Activated B cell treated with CpG ODN at 0.5 μM for 24 hours (primary cell): ENCODE measurements at regions of chr6 and their contacts with region 1.

Region 1: GRCh38 chr6:149028767-149029405 is 282.1 kb downstream of the UST start:
- DNase-seq: no peak
- ATAC-seq: peak; percentile 33
- H3K4me3 Mint-ChIP-seq: no peak overlapping the region
- H3K27ac Mint-ChIP-seq: peak overlapping the region; percentile 75
- H3K4me1 Mint-ChIP-seq: peaks cover 43% of the 10 kb centered on the region
- H3K27me3 Mint-ChIP-seq: no peaks in the 10 kb centered on the region
- CTCF ChIP-seq: peak; percentile 65

Region 2: DNA sequence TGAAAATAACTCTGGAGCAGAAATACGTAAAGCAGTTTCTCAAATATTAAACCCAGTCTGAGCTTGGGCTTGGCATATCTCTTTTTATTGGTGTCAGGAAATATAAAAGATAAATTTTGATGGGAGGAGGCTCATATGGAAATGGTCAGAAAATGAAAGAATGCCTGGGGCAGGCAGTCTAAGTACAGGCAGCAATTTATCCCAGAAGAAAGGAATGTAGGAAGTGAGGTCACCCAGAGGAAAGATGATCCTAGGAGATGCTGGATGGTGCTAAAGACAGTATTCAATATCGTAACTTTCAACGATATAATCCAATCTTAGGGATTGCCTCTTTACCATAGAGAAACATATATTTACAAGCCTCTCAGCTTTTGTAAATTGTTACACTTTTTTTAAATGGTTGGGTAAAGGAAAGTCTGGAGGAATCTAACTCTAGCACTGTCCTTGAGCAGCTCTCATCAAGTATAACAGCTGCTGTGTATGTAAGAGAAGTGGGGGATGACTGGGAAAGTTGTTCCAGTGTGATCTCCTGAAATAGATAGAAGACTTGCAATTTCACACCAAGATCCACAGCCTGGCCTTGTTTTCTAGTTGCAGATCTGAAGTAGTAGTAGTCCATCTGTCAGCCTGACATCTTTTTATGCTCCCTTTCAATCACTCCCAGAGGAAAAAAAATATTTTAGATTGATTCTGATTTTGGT is 943.1 kb before region 1 on chr6:
- CTCF ChIA-PET with region 1: no interaction called
- POLR2A ChIA-PET with region 1: no interaction called
- intact Hi-C with region 1: no loop called
- DNase-seq: no peak
- ATAC-seq: no peak
- H3K4me3 Mint-ChIP-seq: no peak overlapping the region
- H3K27ac Mint-ChIP-seq: no peak overlapping the region
- H3K4me1 Mint-ChIP-seq: no peaks in the 10 kb centered on the region
- H3K27me3 Mint-ChIP-seq: peaks cover 4% of the 10 kb centered on the region
- CTCF ChIP-seq: no peak

Region 3: GRCh38 chr6:148746363-148747144 is 282.3 kb before region 1 on chr6 and contains the start of gene UST:
- CTCF ChIA-PET with region 1: no interaction called
- POLR2A ChIA-PET with region 1: no interaction called
- intact Hi-C with region 1: loop called (anchors 1 kb)
- DNase-seq: peak; percentile 55
- ATAC-seq: peak; percentile 47
- H3K4me3 Mint-ChIP-seq: peak within 1 kb of the TSS; percentile 95
- H3K27ac Mint-ChIP-seq: peak within 1 kb of the TSS; percentile 94
- H3K4me1 Mint-ChIP-seq: peaks cover 42% of the 10 kb centered on the region
- H3K27me3 Mint-ChIP-seq: no peaks in the 10 kb centered on the region
- CTCF ChIP-seq: no peak
- total RNA-seq, gene UST: 14.3 and 18.1 TPM in 2 replicates

Region 4: DNA sequence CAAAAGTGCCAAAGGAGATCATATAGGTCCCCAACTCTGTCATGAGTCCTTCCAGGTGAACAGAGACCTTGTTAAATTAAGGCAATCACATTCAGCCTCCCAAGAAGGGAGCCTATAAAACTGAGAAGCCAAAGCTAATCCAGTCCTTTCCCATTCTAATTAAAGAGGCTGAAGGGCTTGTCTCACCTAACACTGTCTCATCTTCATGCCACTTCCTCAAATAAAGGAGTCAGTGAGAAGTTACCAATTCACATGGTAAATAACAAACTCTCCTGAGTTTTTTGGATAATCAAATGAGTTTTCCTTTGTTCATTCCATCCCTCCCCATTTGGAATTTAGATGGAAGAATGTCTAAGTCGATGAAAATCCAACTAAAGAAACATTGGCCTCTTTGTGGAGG is 39.3 kb before region 1 on chr6:
- CTCF ChIA-PET with region 1: interaction called, 10 read pairs
- POLR2A ChIA-PET with region 1: no interaction called
- intact Hi-C with region 1: no loop called
- DNase-seq: no peak
- ATAC-seq: no peak
- H3K4me3 Mint-ChIP-seq: no peak overlapping the region
- H3K27ac Mint-ChIP-seq: no peak overlapping the region
- H3K4me1 Mint-ChIP-seq: peaks cover 45% of the 10 kb centered on the region
- H3K27me3 Mint-ChIP-seq: no peaks in the 10 kb centered on the region
- CTCF ChIP-seq: no peak

Region 5: GRCh38 chr6:149054559-149055194 is 25.8 kb after region 1 on chr6:
- CTCF ChIA-PET with region 1: interaction called, 4 read pairs
- POLR2A ChIA-PET with region 1: interaction called, 13 read pairs
- intact Hi-C with region 1: no loop called
- DNase-seq: no peak
- ATAC-seq: peak; percentile 84
- H3K4me3 Mint-ChIP-seq: peak overlapping the region; percentile 50
- H3K27ac Mint-ChIP-seq: peak overlapping the region; percentile 55
- H3K4me1 Mint-ChIP-seq: peaks cover 39% of the 10 kb centered on the region
- H3K27me3 Mint-ChIP-seq: no peaks in the 10 kb centered on the region
- CTCF ChIP-seq: no peak

Region 6: GRCh38 chr6:149082286-149082707 is 53.4 kb after region 1 on chr6:
- CTCF ChIA-PET with region 1: interaction called, 18 read pairs
- POLR2A ChIA-PET with region 1: no interaction called
- intact Hi-C with region 1: loop called (anchors 1 kb)
- DNase-seq: peak; percentile 43
- ATAC-seq: peak; percentile 75
- H3K4me3 Mint-ChIP-seq: no peak overlapping the region
- H3K27ac Mint-ChIP-seq: no peak overlapping the region
- H3K4me1 Mint-ChIP-seq: peaks cover 13% of the 10 kb centered on the region
- H3K27me3 Mint-ChIP-seq: no peaks in the 10 kb centered on the region
- CTCF ChIP-seq: peak; percentile 26

Region 7: GRCh38 chr6:149431905-149432775 is 403.3 kb after region 1 on chr6:
- CTCF ChIA-PET with region 1: interaction called, 96 read pairs
- POLR2A ChIA-PET with region 1: interaction called, 4 read pairs
- intact Hi-C with region 1: loop called (anchors 1 kb)
- DNase-seq: peak; percentile 77
- ATAC-seq: peak; percentile 96
- H3K4me3 Mint-ChIP-seq: peak overlapping the region; percentile 44
- H3K27ac Mint-ChIP-seq: no peak overlapping the region
- H3K4me1 Mint-ChIP-seq: peaks cover 4% of the 10 kb centered on the region
- H3K27me3 Mint-ChIP-seq: no peaks in the 10 kb centered on the region
- CTCF ChIP-seq: no peak